Natural killer cell (primary cell): ENCODE measurements at regions of chr2 and their contacts with region 1.

Region 1: DNA sequence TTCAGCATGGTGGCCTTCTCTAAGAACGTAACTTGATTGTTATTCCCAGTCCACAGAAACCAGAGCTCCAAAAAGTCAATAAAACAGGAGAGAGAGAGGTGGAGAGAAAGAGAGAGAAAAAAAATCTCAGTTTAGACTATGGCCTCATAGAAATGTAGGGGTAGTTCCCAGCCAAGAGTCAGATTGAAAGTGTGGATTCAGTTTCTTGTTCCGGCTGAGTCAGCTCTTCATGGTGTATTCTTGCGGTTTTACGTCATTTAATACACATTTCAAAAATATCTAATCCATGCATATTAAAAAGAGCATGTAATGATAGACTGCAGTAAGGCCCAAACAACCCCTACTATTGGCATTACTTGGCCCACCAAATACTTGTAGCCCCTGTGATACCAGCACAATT is 303.9 kb downstream of the ETAA1 start:
- DNase-seq: no peak
- ATAC-seq: no peak
- H3K4me3 ChIP-seq: no peak overlapping the region
- H3K4me3 Mint-ChIP-seq: no peak overlapping the region
- H3K27ac ChIP-seq: no peak overlapping the region
- H3K27ac Mint-ChIP-seq: no peak overlapping the region
- H3K4me1 ChIP-seq: no peaks in the 10 kb centered on the region
- H3K4me1 Mint-ChIP-seq: no peaks in the 10 kb centered on the region
- H3K27me3 ChIP-seq: no peaks in the 10 kb centered on the region
- H3K27me3 Mint-ChIP-seq: peaks cover 5 to 10% of the 10 kb centered on the region in 2 donors
- CTCF ChIP-seq: no peak

Region 2: GRCh38 chr2:67201521-67201920 is 499.5 kb before region 1 on chr2:
- intact Hi-C with region 1: no loop called
- DNase-seq: no peak
- ATAC-seq: no peak
- H3K4me3 ChIP-seq: no peak overlapping the region
- H3K4me3 Mint-ChIP-seq: no peak overlapping the region
- H3K27ac ChIP-seq: no peak overlapping the region
- H3K27ac Mint-ChIP-seq: no peak overlapping the region
- H3K4me1 ChIP-seq: no peaks in the 10 kb centered on the region
- H3K4me1 Mint-ChIP-seq: no peaks in the 10 kb centered on the region
- H3K27me3 ChIP-seq: no peaks in the 10 kb centered on the region
- H3K27me3 Mint-ChIP-seq: no peaks in the 10 kb centered on the region
- CTCF ChIP-seq: no peak

Region 3: DNA sequence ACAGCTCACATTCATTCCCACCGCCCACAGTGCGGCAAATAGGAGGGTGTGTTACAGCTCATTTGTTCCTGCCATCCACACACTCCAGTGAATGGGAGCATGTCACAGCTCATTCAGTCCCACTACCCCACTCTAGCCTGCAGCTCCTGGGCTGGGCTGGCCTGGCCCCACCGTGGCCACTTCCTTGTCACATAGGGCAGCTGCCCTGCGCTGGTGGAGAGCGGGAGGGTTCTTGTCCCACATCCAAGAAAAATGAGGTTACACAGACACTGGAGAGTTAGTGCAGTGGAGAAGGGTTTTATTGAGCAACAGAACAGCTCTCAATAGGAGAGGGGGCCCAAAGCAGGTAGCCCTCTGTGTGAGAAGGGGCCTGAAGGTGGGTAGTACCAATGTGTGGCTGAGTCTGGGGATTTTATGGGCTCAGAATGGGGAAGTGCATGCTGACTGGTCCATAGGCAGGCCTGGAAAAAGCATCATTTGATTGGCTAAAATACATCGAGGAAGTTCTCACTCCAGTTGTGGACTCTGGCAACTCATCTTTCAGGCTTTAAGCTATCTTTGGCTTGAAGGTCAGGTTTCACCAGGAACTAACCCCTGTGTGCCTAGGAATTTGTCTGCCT is 54.2 kb before region 1 on chr2:
- intact Hi-C with region 1: no loop called
- DNase-seq: no peak
- ATAC-seq: no peak
- H3K4me3 ChIP-seq: no peak overlapping the region
- H3K4me3 Mint-ChIP-seq: no peak overlapping the region
- H3K27ac ChIP-seq: no peak overlapping the region
- H3K27ac Mint-ChIP-seq: no peak overlapping the region
- H3K4me1 ChIP-seq: peaks cover 5% of the 10 kb centered on the region
- H3K4me1 Mint-ChIP-seq: peaks cover 28 to 32% of the 10 kb centered on the region in 2 donors
- H3K27me3 ChIP-seq: no peaks in the 10 kb centered on the region
- H3K27me3 Mint-ChIP-seq: no peaks in the 10 kb centered on the region
- CTCF ChIP-seq: no peak

Region 4: DNA sequence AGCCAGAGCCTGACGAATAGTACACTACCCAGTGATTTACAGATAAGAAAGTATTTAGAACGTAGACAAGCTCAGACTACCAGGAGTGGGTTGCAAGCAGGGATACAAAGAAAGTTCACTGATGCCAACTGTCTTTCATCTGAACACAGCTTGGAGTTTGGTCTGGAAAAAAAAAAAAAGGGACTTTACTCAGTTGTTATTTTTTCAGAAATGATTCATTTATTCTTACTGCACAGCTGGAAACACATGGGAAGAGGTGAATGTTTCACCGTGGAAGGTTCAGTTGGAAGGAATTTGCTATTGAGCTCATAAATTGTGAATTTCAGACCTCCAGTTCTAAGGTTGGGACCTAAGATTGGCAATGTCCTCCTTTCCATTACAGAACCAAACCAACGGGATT is 44.1 kb before region 1 on chr2:
- intact Hi-C with region 1: loop called (anchors 1 kb)
- DNase-seq: no peak
- ATAC-seq: no peak
- H3K4me3 ChIP-seq: no peak overlapping the region
- H3K4me3 Mint-ChIP-seq: no peak overlapping the region
- H3K27ac ChIP-seq: no peak overlapping the region
- H3K27ac Mint-ChIP-seq: no peak overlapping the region
- H3K4me1 ChIP-seq: no peaks in the 10 kb centered on the region
- H3K4me1 Mint-ChIP-seq: peaks cover 12 to 15% of the 10 kb centered on the region in 2 donors
- H3K27me3 ChIP-seq: no peaks in the 10 kb centered on the region
- H3K27me3 Mint-ChIP-seq: peaks cover 0 to 7% of the 10 kb centered on the region in 2 donors
- CTCF ChIP-seq: no peak